Heart right ventricle (tissue), 16 donors: ENCODE measurements at regions of chr4 and their contacts with region 1.

Region 1: GRCh38 chr4:41143311-41144039 is 70.9 kb downstream of the APBB2 start:
- DNase-seq: peak in 1 of 2 donors; percentile 64
- ATAC-seq: peak; percentile 59 to 87 (median 83)
- H3K4me3 ChIP-seq: peak overlapping the region in 4 of 10 donors; percentile 5 to 18 (median 11)
- H3K27ac ChIP-seq: peak overlapping the region; percentile 50 to 87 (median 72)
- H3K4me1 ChIP-seq: peaks cover 0 to 68% (median 52%) of the 10 kb centered on the region in 9 donors
- H3K27me3 ChIP-seq: no peaks in the 10 kb centered on the region
- CTCF ChIP-seq: no peak

Region 2: GRCh38 chr4:41050866-41051775 is 92.4 kb before region 1 on chr4:
- intact Hi-C with region 1: loop called in 1 of 10 experiments (anchors 5 kb)
- DNase-seq: peak in 1 of 2 donors; percentile 57
- ATAC-seq: peak; percentile 56 to 92 (median 87)
- H3K4me3 ChIP-seq: peak overlapping the region in 7 of 10 donors; percentile 3 to 49 (median 38)
- H3K27ac ChIP-seq: peak overlapping the region; percentile 64 to 94 (median 78)
- H3K4me1 ChIP-seq: peaks cover 4 to 62% (median 17%) of the 10 kb centered on the region in 9 donors
- H3K27me3 ChIP-seq: no peaks in the 10 kb centered on the region
- CTCF ChIP-seq: no peak

Region 3: DNA sequence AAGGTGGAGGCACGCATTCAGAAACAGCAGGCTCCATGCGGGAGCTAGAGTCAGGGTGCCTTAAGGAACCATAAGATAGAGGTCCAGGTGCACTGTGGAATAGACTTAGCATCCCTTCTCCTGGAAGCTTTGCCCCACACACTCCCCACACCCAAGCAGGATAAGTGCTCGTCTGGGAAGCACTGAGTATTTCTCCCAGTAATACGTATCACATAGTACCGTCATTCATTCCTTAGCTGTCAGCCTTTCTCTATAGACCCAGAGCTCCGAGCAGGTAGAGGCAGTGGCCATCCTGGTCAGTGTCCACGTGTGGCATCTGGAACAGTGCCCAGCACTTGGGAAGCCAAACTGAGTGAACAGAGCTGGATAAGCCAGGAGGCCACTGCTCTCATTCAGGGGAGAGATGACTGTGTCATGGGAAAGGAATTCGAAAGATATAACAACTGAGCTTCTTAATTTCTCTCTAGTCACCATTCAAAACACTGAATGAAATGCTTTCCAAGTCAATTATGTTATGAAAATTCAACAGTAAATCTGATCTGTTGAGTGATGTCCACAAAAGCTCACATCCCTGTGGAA is 61.0 kb after region 1 on chr4:
- intact Hi-C with region 1: loop called in 2 of 10 experiments (anchors 10 kb)
- DNase-seq: peak; percentile 46 to 66
- ATAC-seq: peak; percentile 46 to 89 (median 69)
- H3K4me3 ChIP-seq: peak overlapping the region in 1 of 10 donors; percentile 2
- H3K27ac ChIP-seq: peak overlapping the region in 8 of 10 donors; percentile 15 to 76 (median 60)
- H3K4me1 ChIP-seq: peaks cover 0 to 100% (median 70%) of the 10 kb centered on the region in 9 donors
- H3K27me3 ChIP-seq: no peaks in the 10 kb centered on the region
- CTCF ChIP-seq: no peak